ENCODE measurements at regions of chr2 and their contacts with region 1.

Region 1: DNA sequence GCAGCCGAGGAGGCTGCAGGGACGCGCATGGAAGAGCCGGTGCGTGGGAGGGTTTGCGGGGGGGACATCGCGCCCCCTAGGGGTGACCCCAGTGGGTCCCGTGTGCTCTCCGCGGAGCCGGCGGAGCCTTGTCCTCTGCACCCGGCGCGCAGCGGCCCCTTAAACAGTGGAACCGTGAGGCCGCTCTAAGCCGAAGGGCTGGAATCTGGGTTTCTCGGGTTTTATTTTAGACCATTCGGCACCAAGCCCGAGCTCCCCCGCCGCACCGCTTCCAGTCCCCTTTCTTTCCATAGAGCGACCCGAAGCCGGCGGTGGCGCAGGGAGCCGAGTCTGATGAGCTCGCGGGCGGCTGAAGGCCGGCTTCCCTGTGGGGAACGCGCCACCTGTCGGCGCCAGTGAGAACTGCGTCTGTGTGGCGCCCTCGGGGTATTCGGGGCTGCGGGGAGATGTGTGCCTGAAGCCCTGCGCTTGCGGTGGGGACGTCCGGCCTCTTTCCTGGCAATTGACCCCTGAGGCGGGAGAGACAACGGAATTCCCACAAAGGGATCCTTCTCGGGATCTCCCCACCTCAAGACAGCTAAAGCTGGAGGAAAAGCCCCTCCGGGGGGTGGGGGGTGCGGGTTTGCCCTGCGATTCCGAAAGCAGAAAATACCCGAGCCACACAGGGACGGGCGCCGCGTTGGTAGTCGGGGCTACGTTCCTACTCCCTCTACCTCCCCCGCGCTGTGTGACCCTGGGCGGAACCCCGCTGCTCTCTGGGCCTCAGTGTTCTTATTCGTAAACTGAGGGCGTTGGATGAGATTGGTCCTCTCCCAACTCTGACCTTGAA is 8.2 kb upstream of the EN1 start:
- DNase-seq: no peak
- H3K4me3 ChIP-seq: peak overlapping the region; percentile 60
- CTCF ChIP-seq: peak; percentile 98

Region 2: GRCh38 chr2:118207889-118208288 is 647.8 kb before region 1 on chr2:
- CTCF ChIA-PET with region 1: interaction called, 63 read pairs
- POLR2A ChIA-PET with region 1: no interaction called
- DNase-seq: no peak
- H3K4me3 ChIP-seq: no peak overlapping the region
- CTCF ChIP-seq: no peak

Region 3: DNA sequence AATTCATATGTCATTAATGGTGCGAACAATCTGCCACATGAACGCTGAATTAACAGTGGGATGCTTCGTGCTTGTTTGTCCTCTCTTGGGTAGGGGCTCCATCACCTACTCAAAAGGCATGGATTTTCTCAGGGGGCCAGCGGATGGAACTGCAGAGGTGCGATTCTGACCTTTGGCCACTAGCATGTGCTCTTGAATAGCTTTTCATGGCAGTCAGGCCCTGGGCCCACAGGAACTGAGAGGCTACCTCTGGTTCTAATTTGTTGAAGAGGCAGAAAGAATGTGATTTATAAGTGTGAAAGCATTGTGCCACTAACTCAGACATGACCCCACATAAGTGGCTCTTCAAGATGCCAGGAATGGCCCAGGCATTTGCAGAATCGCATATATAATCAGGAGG is 484.1 kb before region 1 on chr2:
- CTCF ChIA-PET with region 1: interaction called, 83 read pairs
- POLR2A ChIA-PET with region 1: no interaction called
- DNase-seq: no peak
- H3K4me3 ChIP-seq: no peak overlapping the region
- CTCF ChIP-seq: peak; percentile 89

Region 4: DNA sequence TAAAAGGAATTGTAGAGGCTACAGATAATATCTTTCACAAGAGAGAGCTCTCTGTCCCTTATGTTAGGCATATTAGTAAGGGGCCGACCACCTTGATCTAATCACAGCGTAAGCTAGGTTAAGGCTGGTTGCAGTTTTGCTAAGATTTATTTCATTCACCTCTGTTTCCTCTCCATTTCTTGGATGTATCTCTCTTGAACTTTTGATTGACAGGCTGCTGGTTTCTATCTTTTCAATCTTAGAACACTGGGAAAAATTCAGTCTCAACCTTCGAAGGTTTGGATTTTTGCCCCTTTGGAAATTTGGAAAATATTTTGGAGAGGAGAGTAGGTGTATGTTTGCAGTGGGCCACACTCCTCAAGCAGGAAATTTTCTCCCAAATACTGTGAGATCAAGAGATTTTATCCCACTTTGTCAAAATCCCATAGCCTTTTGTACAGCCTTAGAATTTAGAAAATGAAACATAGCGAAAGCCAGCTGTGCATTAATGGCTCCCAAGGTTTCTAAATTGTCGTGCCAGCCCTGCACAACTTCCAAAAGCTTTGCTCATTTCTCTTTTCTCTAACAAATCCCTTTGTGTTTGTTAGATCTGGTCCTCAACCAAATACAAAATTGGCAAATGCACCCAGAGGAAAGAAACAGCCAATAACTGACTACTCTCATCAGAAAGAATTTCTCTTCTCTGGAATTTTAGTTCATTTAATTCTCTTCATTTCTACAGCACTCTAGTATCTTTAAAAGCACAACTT is 406.4 kb before region 1 on chr2:
- CTCF ChIA-PET with region 1: interaction called, 13 read pairs
- POLR2A ChIA-PET with region 1: no interaction called
- DNase-seq: no peak
- H3K4me3 ChIP-seq: no peak overlapping the region
- CTCF ChIP-seq: no peak

Region 5: GRCh38 chr2:118557791-118558190 is 297.9 kb before region 1 on chr2:
- CTCF ChIA-PET with region 1: interaction called, 10 read pairs
- POLR2A ChIA-PET with region 1: no interaction called
- DNase-seq: no peak
- H3K4me3 ChIP-seq: no peak overlapping the region
- CTCF ChIP-seq: no peak

Region 6: GRCh38 chr2:118763797-118764196 is 91.9 kb before region 1 on chr2:
- CTCF ChIA-PET with region 1: interaction called, 82 read pairs
- POLR2A ChIA-PET with region 1: no interaction called
- DNase-seq: no peak
- H3K4me3 ChIP-seq: no peak overlapping the region; the same call in 1 of the 2 replicates
- CTCF ChIP-seq: peak; percentile 67